ENCODE measurements at regions of chr3 and their contacts with region 1.

Region 1: DNA sequence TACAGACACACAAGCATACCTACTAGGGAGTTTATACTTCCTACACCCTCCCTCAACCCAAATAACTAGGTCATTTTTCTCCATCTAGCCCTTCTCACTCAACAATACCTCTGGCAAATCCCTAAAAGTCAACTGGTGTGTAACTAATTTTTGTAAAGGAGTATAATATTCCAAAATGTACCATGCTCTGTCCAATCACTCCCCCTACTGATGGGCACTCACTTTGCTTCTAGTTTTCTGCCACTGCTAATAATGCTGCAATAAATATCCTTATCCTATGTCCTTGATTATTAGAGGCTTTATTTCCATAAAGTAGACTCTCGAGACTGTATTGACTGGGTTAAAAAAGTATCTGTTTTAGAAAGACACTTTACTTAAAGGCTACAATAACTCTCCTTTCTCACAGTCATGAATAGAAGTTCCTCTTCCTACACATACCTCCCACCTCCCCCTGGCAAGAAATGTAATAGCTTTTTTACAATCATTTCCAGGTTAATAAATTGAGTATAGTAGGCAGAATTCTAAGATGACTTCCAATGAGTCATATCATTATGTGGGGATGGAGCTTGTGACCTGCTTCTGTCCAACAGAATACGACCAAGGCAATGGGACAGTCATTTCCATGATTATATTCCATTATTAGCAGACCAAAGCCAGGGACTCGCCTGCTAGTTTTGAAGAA is 30.0 kb downstream of the SHQ1 start:
- DNase-seq: no peak
- ATAC-seq: no peak
- H3K4me3 Mint-ChIP-seq: no peak overlapping the region
- H3K27ac Mint-ChIP-seq: no peak overlapping the region
- H3K4me1 Mint-ChIP-seq: peaks cover 11% of the 10 kb centered on the region
- H3K27me3 Mint-ChIP-seq: no peaks in the 10 kb centered on the region

Region 2: GRCh38 chr3:71875461-71875947 is 942.7 kb before region 1 on chr3:
- CTCF ChIA-PET with region 1: interaction called, 42 read pairs
- DNase-seq: peak; percentile 86
- ATAC-seq: peak; percentile 96
- H3K4me3 Mint-ChIP-seq: no peak overlapping the region
- H3K27ac Mint-ChIP-seq: no peak overlapping the region
- H3K4me1 Mint-ChIP-seq: peaks cover 23% of the 10 kb centered on the region
- H3K27me3 Mint-ChIP-seq: peaks cover 6% of the 10 kb centered on the region

Region 3: DNA sequence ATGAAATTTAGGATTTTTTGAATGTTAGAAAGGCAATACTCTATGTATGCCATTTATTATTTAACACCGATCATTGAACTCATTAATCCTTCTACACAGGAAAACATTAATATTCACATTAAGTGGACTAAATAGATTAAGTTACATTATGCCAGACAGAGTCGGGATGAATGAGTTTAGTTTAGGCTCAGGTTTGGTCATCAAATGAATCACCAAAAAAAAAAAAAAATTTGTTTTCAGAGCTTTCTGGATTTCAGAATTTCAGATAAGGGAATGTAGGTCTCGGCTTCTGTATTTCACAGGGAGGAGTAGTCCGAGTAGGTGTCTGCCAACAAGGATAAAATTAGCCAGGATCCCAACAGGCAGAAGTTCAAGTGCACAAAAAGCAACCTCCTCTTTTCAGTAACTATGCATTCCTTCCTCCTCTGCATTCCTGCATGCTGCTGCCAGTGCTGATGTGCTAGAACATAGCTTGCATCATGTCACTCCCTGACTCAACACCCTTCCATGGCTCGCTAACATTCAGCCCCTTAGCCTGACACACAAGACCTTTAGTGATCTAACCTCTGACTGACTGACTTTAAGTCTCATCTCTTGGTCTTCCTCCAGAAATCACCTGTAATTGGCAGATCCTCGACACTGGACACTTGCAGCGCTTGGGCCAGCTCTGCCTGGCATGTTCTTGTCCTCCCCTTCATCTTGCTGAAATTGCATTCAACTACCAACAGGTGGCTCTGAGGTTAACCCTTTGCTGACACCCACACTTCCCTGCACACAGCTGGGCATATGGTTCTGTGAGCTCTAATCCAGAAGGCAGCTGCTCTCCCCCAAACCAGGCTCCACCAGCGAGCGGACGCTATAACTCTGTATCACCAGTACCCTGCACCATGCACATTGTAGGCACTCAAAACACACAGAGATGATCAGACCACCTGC is 887.9 kb before region 1 on chr3:
- CTCF ChIA-PET with region 1: interaction called, 13 read pairs
- DNase-seq: no peak
- ATAC-seq: peak; percentile 27
- H3K4me3 Mint-ChIP-seq: no peak overlapping the region
- H3K27ac Mint-ChIP-seq: no peak overlapping the region
- H3K4me1 Mint-ChIP-seq: peaks cover 3% of the 10 kb centered on the region
- H3K27me3 Mint-ChIP-seq: no peaks in the 10 kb centered on the region

Region 4: GRCh38 chr3:72665701-72666443 is 152.4 kb before region 1 on chr3:
- CTCF ChIA-PET with region 1: interaction called, 19 read pairs
- DNase-seq: peak; percentile 52
- ATAC-seq: no peak
- H3K4me3 Mint-ChIP-seq: no peak overlapping the region
- H3K27ac Mint-ChIP-seq: no peak overlapping the region
- H3K4me1 Mint-ChIP-seq: no peaks in the 10 kb centered on the region
- H3K27me3 Mint-ChIP-seq: no peaks in the 10 kb centered on the region

Region 5: GRCh38 chr3:72847751-72848702 is 29.8 kb after region 1 on chr3 and contains the start of gene SHQ1:
- CTCF ChIA-PET with region 1: interaction called, 14 read pairs
- DNase-seq: peak; percentile 97
- ATAC-seq: peak; percentile 93
- H3K4me3 Mint-ChIP-seq: peak within 1 kb of the TSS; percentile 92
- H3K27ac Mint-ChIP-seq: peak within 1 kb of the TSS; percentile 76
- H3K4me1 Mint-ChIP-seq: peaks cover 45% of the 10 kb centered on the region
- H3K27me3 Mint-ChIP-seq: peaks cover 5% of the 10 kb centered on the region
- total RNA-seq, gene SHQ1: 27.4 to 30.7 TPM